ENCODE measurements at regions of chr1 and their contacts with region 1.

Region 1: DNA sequence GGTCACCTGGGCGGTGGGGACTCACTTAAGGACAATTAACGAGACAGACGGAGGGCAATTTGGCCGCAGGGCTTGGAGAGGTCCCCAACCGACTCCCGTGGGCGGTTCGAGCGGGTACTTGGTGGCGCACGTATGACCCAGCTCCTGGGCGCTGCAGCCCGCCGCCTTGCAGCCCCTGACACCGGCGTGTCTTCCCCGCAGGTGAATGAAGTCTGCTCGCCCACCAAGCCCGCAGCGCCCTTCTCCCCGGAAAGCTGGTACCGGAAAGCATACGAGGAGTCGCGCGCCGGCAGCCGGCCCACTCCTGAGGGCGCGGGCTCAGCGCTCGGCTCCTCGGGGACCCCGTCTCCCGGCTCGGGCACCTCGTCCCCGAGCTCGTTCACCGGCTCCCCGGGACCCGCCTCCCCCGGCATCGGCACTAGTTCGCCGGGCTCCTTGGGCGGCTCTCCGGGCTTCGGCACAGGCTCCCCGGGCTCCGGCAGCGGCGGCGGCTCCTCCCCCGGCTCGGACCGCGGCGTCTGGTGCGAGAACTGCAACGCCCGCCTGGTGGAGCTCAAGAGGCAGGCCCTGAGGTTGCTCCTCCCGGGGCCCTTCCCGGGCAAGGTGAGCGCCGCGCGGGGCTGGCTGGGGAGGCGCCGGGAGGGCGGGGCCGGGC is 1.4 kb downstream of the KIF26B start:
- DNase-seq: peak; percentile 28 to 83 (median 58)
- ATAC-seq: peak; percentile 93
- H3K4me3 ChIP-seq: peak overlapping the region; percentile 52
- H3K4me3 Mint-ChIP-seq: peak overlapping the region; percentile 76 to 88 (median 83)
- H3K27ac ChIP-seq: no peak overlapping the region
- H3K27ac Mint-ChIP-seq: peak overlapping the region in 1 of 9 donors; percentile 29
- H3K4me1 ChIP-seq: peaks cover 15 to 20% of the 10 kb centered on the region in 2 donors
- H3K4me1 Mint-ChIP-seq: peaks cover 0 to 28% (median 26%) of the 10 kb centered on the region in 7 donors
- H3K27me3 ChIP-seq: peaks cover 3 to 13% of the 10 kb centered on the region in 2 donors
- H3K27me3 Mint-ChIP-seq: peaks cover 53 to 71% (median 67%) of the 10 kb centered on the region in 5 donors

Region 2: GRCh38 chr1:245129319-245130240 is 26.6 kb before region 1 on chr1:
- CTCF ChIA-PET with region 1: no interaction called
- POLR2A ChIA-PET with region 1: no interaction called
- intact Hi-C with region 1: no loop called
- DNase-seq: no peak
- ATAC-seq: no peak
- H3K4me3 ChIP-seq: no peak overlapping the region
- H3K4me3 Mint-ChIP-seq: no peak overlapping the region
- H3K27ac ChIP-seq: no peak overlapping the region
- H3K27ac Mint-ChIP-seq: no peak overlapping the region
- H3K4me1 ChIP-seq: no peaks in the 10 kb centered on the region
- H3K4me1 Mint-ChIP-seq: peaks cover 0 to 4% (median 0%) of the 10 kb centered on the region in 7 donors
- H3K27me3 ChIP-seq: no peaks in the 10 kb centered on the region
- H3K27me3 Mint-ChIP-seq: peaks cover 0 to 42% (median 34%) of the 10 kb centered on the region in 5 donors

Region 3: GRCh38 chr1:245380790-245381535 is 224.8 kb after region 1 on chr1:
- CTCF ChIA-PET with region 1: no interaction called
- POLR2A ChIA-PET with region 1: no interaction called
- intact Hi-C with region 1: loop called in 1 of 2 experiments (anchors 2 kb)
- DNase-seq: no peak
- ATAC-seq: no peak
- H3K4me3 ChIP-seq: no peak overlapping the region
- H3K4me3 Mint-ChIP-seq: no peak overlapping the region
- H3K27ac ChIP-seq: no peak overlapping the region
- H3K27ac Mint-ChIP-seq: peak overlapping the region in 1 of 9 donors; percentile 20
- H3K4me1 ChIP-seq: peaks cover 0 to 12% of the 10 kb centered on the region in 2 donors
- H3K4me1 Mint-ChIP-seq: peaks cover 5 to 25% (median 20%) of the 10 kb centered on the region in 7 donors
- H3K27me3 ChIP-seq: no peaks in the 10 kb centered on the region
- H3K27me3 Mint-ChIP-seq: peaks cover 0 to 16% (median 8%) of the 10 kb centered on the region in 5 donors

Region 4: GRCh38 chr1:245558069-245558468 is 401.9 kb after region 1 on chr1:
- CTCF ChIA-PET with region 1: no interaction called
- POLR2A ChIA-PET with region 1: no interaction called
- intact Hi-C with region 1: no loop called
- DNase-seq: no peak
- ATAC-seq: no peak
- H3K4me3 ChIP-seq: no peak overlapping the region
- H3K4me3 Mint-ChIP-seq: no peak overlapping the region
- H3K27ac ChIP-seq: no peak overlapping the region
- H3K27ac Mint-ChIP-seq: no peak overlapping the region
- H3K4me1 ChIP-seq: no peaks in the 10 kb centered on the region
- H3K4me1 Mint-ChIP-seq: no peaks in the 10 kb centered on the region
- H3K27me3 ChIP-seq: no peaks in the 10 kb centered on the region
- H3K27me3 Mint-ChIP-seq: peaks cover 0 to 11% (median 7%) of the 10 kb centered on the region in 5 donors

Region 5: DNA sequence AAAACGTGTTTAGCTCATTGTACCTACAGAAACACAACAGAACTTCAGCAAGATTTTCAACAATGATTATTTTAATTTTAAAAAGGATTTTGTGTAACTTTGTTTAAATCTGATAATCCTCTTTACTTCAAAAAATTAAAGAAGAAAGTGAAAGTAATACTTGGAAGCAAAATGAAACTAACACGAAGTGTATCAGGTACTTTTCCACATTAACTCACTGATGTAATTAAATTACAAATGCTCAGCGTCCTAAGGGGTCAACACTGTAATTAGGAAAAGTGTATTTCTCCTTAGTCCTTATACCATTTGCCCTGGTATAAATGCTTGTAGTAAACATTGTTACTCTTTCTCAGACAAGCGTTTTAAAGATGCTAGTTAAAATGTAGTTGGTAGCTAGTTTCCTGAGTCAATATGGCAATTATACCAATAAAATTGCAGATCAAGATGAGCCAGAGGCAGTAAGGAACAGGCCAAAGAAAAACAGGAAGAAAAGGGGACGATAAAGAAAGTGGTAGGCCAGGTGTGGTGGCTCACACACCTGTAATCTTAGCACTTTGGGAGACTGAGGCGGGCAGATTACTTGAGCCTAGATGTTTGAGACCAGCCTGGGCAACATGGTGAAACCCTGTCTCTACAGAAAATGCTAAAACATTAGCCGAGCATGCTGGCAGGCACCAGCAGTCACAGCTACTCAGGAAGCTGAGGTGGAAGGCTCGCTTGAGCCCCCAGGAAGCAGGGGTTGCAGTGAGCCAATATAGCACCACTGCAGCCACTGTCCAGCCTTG is 797.9 kb after region 1 on chr1:
- CTCF ChIA-PET with region 1: no interaction called
- POLR2A ChIA-PET with region 1: no interaction called
- intact Hi-C with region 1: loop called in 1 of 2 experiments (anchors 5 kb)
- DNase-seq: peak in 6 of 9 donors; percentile 17 to 49 (median 34)
- ATAC-seq: peak; percentile 45
- H3K4me3 ChIP-seq: peak overlapping the region; percentile 31
- H3K4me3 Mint-ChIP-seq: peak overlapping the region in 8 of 10 donors; percentile 56 to 90 (median 78)
- H3K27ac ChIP-seq: peak overlapping the region; percentile 76
- H3K27ac Mint-ChIP-seq: peak overlapping the region in 1 of 9 donors; percentile 97
- H3K4me1 ChIP-seq: peaks cover 25 to 27% of the 10 kb centered on the region in 2 donors
- H3K4me1 Mint-ChIP-seq: peaks cover 9 to 29% (median 19%) of the 10 kb centered on the region in 7 donors
- H3K27me3 ChIP-seq: no peaks in the 10 kb centered on the region
- H3K27me3 Mint-ChIP-seq: no peaks in the 10 kb centered on the region

Region 6: GRCh38 chr1:246117066-246117791 is 961.0 kb after region 1 on chr1:
- CTCF ChIA-PET with region 1: interaction called, 3 read pairs
- POLR2A ChIA-PET with region 1: no interaction called
- intact Hi-C with region 1: loop called (anchors 1 kb)
- DNase-seq: peak in 7 of 9 donors; percentile 66 to 89 (median 83)
- ATAC-seq: peak; percentile 94
- H3K4me3 ChIP-seq: peak overlapping the region; percentile 34
- H3K4me3 Mint-ChIP-seq: peak overlapping the region; percentile 23 to 92 (median 68)
- H3K27ac ChIP-seq: peak overlapping the region; percentile 69
- H3K27ac Mint-ChIP-seq: peak overlapping the region; percentile 11 to 95 (median 87)
- H3K4me1 ChIP-seq: peaks cover 6 to 9% of the 10 kb centered on the region in 2 donors
- H3K4me1 Mint-ChIP-seq: peaks cover 13 to 50% (median 38%) of the 10 kb centered on the region in 7 donors
- H3K27me3 ChIP-seq: no peaks in the 10 kb centered on the region
- H3K27me3 Mint-ChIP-seq: no peaks in the 10 kb centered on the region

Region 7: GRCh38 chr1:246699095-246699735 is 1543.0 kb after region 1 on chr1:
- CTCF ChIA-PET with region 1: no interaction called
- POLR2A ChIA-PET with region 1: no interaction called
- intact Hi-C with region 1: loop called in 1 of 2 experiments (anchors 5 kb)
- DNase-seq: peak; percentile 48 to 81 (median 74)
- ATAC-seq: peak; percentile 98
- H3K4me3 ChIP-seq: peak overlapping the region; percentile 26
- H3K4me3 Mint-ChIP-seq: peak overlapping the region; percentile 30 to 76 (median 70)
- H3K27ac ChIP-seq: no peak overlapping the region
- H3K27ac Mint-ChIP-seq: peak overlapping the region in 2 of 9 donors; percentile 13 to 39
- H3K4me1 ChIP-seq: no peaks in the 10 kb centered on the region
- H3K4me1 Mint-ChIP-seq: peaks cover 0 to 11% (median 7%) of the 10 kb centered on the region in 7 donors
- H3K27me3 ChIP-seq: no peaks in the 10 kb centered on the region
- H3K27me3 Mint-ChIP-seq: peaks cover 0 to 10% (median 0%) of the 10 kb centered on the region in 5 donors